ENCODE measurements at regions of chr18 and their contacts with region 1.

Region 1: GRCh38 chr18:31685097-31686082 is 1.0 kb upstream of the B4GALT6 start:
- DNase-seq: peak; percentile 49 to 86
- H3K4me3 ChIP-seq: peak overlapping the region; percentile 73 to 82 (median 80)
- H3K27ac ChIP-seq: peak overlapping the region; percentile 79
- H3K4me1 ChIP-seq: peaks cover 11 to 14% (median 13%) of the 10 kb centered on the region in 4 experiments; a peak in 6 of 7 replicates
- H3K27me3 ChIP-seq: no peaks in the 10 kb centered on the region
- CTCF ChIP-seq: peak; percentile 4 to 50 (median 39)
- EP300 ChIP-seq: no peak; a peak in 1 of 3 replicates
- POLR2A ChIP-seq: peak; percentile 37 to 81
- RAD21 ChIP-seq: peak in 1 of 2 experiments; percentile 22; a peak in 1 of 4 replicates

Region 2: GRCh38 chr18:31512203-31512764 is 173.1 kb before region 1 on chr18:
- CTCF ChIA-PET with region 1: no interaction called
- POLR2A ChIA-PET with region 1: no interaction called
- DNase-seq: no peak
- H3K4me3 ChIP-seq: no peak overlapping the region
- H3K27ac ChIP-seq: no peak overlapping the region
- H3K4me1 ChIP-seq: peaks cover 0 to 14% (median 6%) of the 10 kb centered on the region in 4 experiments; a peak in 4 of 7 replicates
- H3K27me3 ChIP-seq: no peaks in the 10 kb centered on the region
- CTCF ChIP-seq: no peak
- EP300 ChIP-seq: no peak
- POLR2A ChIP-seq: no peak
- RAD21 ChIP-seq: no peak

Region 3: GRCh38 chr18:31658670-31659575 is 26.5 kb before region 1 on chr18:
- CTCF ChIA-PET with region 1: interaction called, 10 read pairs
- POLR2A ChIA-PET with region 1: no interaction called
- DNase-seq: no peak
- H3K4me3 ChIP-seq: no peak overlapping the region
- H3K27ac ChIP-seq: no peak overlapping the region
- H3K4me1 ChIP-seq: peaks cover 0 to 7% (median 2%) of the 10 kb centered on the region in 4 experiments; a peak in 2 of 7 replicates
- H3K27me3 ChIP-seq: no peaks in the 10 kb centered on the region
- CTCF ChIP-seq: no peak
- EP300 ChIP-seq: no peak
- POLR2A ChIP-seq: no peak
- RAD21 ChIP-seq: no peak

Region 4: GRCh38 chr18:31672628-31673135 is 12.7 kb before region 1 on chr18:
- CTCF ChIA-PET with region 1: interaction called, 13 read pairs
- POLR2A ChIA-PET with region 1: interaction called, 6 read pairs
- DNase-seq: no peak
- H3K4me3 ChIP-seq: no peak overlapping the region
- H3K27ac ChIP-seq: peak overlapping the region; percentile 13; the same call in 1 of the 2 replicates
- H3K4me1 ChIP-seq: peaks cover 0 to 12% (median 8%) of the 10 kb centered on the region in 4 experiments; a peak in 5 of 7 replicates
- H3K27me3 ChIP-seq: no peaks in the 10 kb centered on the region
- CTCF ChIP-seq: no peak
- EP300 ChIP-seq: no peak
- POLR2A ChIP-seq: no peak
- RAD21 ChIP-seq: no peak

Region 5: DNA sequence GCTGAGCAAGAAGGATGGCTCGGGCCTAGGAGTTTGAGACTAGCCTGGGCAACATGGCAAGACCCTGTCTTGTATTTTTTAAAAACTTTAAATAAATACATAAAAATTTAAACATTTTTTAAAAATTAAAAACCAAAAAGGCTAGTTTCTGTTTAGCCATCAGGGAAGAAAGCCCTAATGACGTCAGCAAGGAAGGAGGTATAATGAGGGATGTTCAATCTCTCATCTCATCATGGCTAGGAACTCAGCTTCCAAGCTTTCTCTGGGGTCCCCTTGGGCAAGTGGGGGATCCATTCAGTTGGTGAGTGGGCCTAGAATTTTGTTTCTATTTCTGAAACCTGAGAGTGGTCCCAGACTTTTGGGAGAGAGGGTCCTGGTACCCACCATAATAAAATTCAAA is 110.4 kb after region 1 on chr18:
- CTCF ChIA-PET with region 1: no interaction called
- POLR2A ChIA-PET with region 1: no interaction called
- DNase-seq: no peak
- H3K4me3 ChIP-seq: no peak overlapping the region
- H3K27ac ChIP-seq: no peak overlapping the region
- H3K4me1 ChIP-seq: no peaks in the 10 kb centered on the region
- H3K27me3 ChIP-seq: no peaks in the 10 kb centered on the region; a peak in 1 of 7 replicates
- CTCF ChIP-seq: no peak
- EP300 ChIP-seq: no peak
- POLR2A ChIP-seq: no peak
- RAD21 ChIP-seq: no peak

Measured in H1 (cell line).